MCF 10A (cell line): ENCODE measurements at regions of chr16 and their contacts with region 1.

Region 1: GRCh38 chr16:15888072-15888976 is at the start of gene CEP20:
- DNase-seq: peak; percentile 99
- H3K4me3 Mint-ChIP-seq: peak within 1 kb of the TSS; percentile 94
- H3K27ac Mint-ChIP-seq: peak within 1 kb of the TSS; percentile 91
- H3K4me1 Mint-ChIP-seq: peaks cover 15% of the 10 kb centered on the region
- H3K27me3 Mint-ChIP-seq: no peaks in the 10 kb centered on the region
- CTCF ChIP-seq: no peak
- total RNA-seq, gene CEP20: 54.7 and 70.1 TPM in 2 replicates

Region 2: GRCh38 chr16:15807603-15808009 is 80.7 kb before region 1 on chr16:
- CTCF ChIA-PET with region 1: no interaction called
- POLR2A ChIA-PET with region 1: no interaction called
- intact Hi-C with region 1: no loop called
- DNase-seq: no peak
- H3K4me3 Mint-ChIP-seq: no peak overlapping the region
- H3K27ac Mint-ChIP-seq: no peak overlapping the region
- H3K4me1 Mint-ChIP-seq: no peaks in the 10 kb centered on the region
- H3K27me3 Mint-ChIP-seq: peaks cover 9% of the 10 kb centered on the region
- CTCF ChIP-seq: no peak

Region 3: GRCh38 chr16:15919331-15919730 is 31.0 kb after region 1 on chr16:
- CTCF ChIA-PET with region 1: interaction called, 3 read pairs
- POLR2A ChIA-PET with region 1: interaction called, 12 read pairs
- intact Hi-C with region 1: no loop called
- DNase-seq: no peak
- H3K4me3 Mint-ChIP-seq: no peak overlapping the region
- H3K27ac Mint-ChIP-seq: peak overlapping the region; percentile 89
- H3K4me1 Mint-ChIP-seq: peaks cover 14% of the 10 kb centered on the region
- H3K27me3 Mint-ChIP-seq: no peaks in the 10 kb centered on the region
- CTCF ChIP-seq: no peak

Region 4: GRCh38 chr16:15949210-15950160 is 61.2 kb after region 1 on chr16 and contains the start of gene ABCC1:
- CTCF ChIA-PET with region 1: no interaction called
- POLR2A ChIA-PET with region 1: interaction called, 29 read pairs
- intact Hi-C with region 1: no loop called
- DNase-seq: no peak
- H3K4me3 Mint-ChIP-seq: peak within 1 kb of the TSS; percentile 87
- H3K27ac Mint-ChIP-seq: peak within 1 kb of the TSS; percentile 92
- H3K4me1 Mint-ChIP-seq: peaks cover 23% of the 10 kb centered on the region
- H3K27me3 Mint-ChIP-seq: no peaks in the 10 kb centered on the region
- CTCF ChIP-seq: no peak
- total RNA-seq, gene ABCC1: 72.5 and 95.3 TPM in 2 replicates

Region 5: DNA sequence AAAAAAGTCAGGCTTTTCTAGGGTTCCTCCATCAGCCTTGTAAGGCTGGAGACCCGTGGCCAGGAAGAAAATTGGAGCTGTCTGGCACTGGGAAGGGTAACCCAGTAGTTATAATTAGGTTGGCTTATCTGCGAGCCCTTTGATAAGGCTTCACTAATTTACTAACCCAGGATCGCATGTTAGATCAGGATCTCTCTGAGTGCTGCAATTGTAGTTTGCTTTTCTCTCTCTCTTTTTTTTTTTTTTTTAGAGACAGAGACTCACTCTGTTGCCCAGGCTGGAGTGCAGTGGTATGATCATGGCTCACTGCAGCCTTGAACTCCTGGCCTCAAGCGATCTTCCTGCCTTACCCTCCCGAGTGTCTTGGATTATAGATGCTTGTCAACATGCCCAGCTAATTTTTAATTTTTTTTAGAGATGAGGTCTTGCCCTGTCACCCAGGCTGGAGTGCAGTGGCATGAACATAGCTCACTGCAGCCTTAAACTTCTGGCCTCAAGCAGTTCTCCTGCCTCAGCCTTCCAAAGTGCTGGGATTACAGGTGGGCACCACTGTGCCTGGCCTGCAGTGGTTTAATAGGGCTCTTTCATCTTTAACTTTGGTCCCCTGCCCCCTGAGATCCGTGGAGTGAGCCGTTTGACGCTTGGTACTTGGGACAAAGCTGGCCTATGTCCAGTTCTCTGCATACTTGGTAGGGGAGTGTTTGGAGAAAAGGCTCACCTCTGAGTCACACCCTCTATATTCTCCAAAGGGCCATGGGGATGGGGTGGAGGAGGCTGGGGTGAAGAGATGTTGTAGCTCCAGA is 78.3 kb after region 1 on chr16:
- CTCF ChIA-PET with region 1: interaction called, 3 read pairs
- POLR2A ChIA-PET with region 1: interaction called, 18 read pairs
- intact Hi-C with region 1: no loop called
- DNase-seq: peak; percentile 91
- H3K4me3 Mint-ChIP-seq: peak overlapping the region; percentile 30
- H3K27ac Mint-ChIP-seq: peak overlapping the region; percentile 75
- H3K4me1 Mint-ChIP-seq: peaks cover 24% of the 10 kb centered on the region
- H3K27me3 Mint-ChIP-seq: no peaks in the 10 kb centered on the region
- CTCF ChIP-seq: no peak

Region 6: DNA sequence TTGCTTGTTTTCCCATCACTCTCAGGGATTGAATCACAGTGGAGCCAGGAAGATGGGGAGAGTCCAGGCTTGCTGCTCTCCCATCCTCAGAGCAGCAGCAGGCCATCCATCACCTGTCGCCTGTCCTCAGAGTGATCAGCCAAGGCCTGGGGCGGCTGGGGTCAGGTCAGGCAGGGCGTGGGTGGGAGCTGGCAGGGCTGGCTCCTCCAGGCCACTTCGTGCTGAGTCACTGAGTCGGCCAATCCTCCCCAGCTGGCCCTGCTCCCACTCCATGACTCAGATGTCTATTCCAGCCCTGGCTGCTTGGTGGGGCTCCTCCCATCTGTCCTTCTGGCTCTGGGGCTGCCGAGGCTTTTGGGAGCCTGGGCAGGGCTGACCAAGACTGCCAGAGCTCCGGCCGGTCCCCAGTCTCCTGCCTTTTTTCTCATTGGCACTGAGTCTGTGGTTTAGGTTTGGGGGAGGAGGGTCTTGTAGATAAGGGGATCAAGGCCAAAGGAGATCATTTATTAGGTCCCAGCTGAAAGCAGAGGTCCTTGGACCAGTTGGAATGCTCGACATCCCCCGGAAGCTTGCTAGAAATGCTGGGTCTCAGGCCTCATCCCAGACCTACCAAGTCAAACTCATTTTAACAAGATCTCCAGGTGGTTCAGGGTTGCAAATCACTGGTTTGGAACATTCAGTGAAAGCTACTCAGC is 133.8 kb after region 1 on chr16:
- CTCF ChIA-PET with region 1: interaction called, 3 read pairs
- POLR2A ChIA-PET with region 1: interaction called, 17 read pairs
- intact Hi-C with region 1: no loop called
- DNase-seq: peak; percentile 97
- H3K4me3 Mint-ChIP-seq: peak overlapping the region; percentile 28
- H3K27ac Mint-ChIP-seq: peak overlapping the region; percentile 69
- H3K4me1 Mint-ChIP-seq: peaks cover 44% of the 10 kb centered on the region
- H3K27me3 Mint-ChIP-seq: no peaks in the 10 kb centered on the region
- CTCF ChIP-seq: no peak